WTC11 (cell line): ENCODE measurements at regions of chr12 and their contacts with region 1.

Region 1: GRCh38 chr12:125183187-125184067 is 118.2 kb downstream of the AACS start:
- DNase-seq: peak; percentile 91
- ATAC-seq: peak; percentile 46
- H3K4me3 Mint-ChIP-seq: peak overlapping the region; percentile 62
- H3K27ac Mint-ChIP-seq: no peak overlapping the region
- H3K4me1 Mint-ChIP-seq: peaks cover 37% of the 10 kb centered on the region
- H3K27me3 Mint-ChIP-seq: peaks cover 27% of the 10 kb centered on the region
- CTCF ChIP-seq: peak; percentile 100

Region 2: GRCh38 chr12:124927201-124928094 is 256.0 kb before region 1 on chr12:
- CTCF ChIA-PET with region 1: no interaction called
- POLR2A ChIA-PET with region 1: no interaction called
- DNase-seq: peak; percentile 94
- ATAC-seq: peak; percentile 75
- H3K4me3 Mint-ChIP-seq: peak overlapping the region; percentile 99
- H3K27ac Mint-ChIP-seq: peak overlapping the region; percentile 96
- H3K4me1 Mint-ChIP-seq: peaks cover 15% of the 10 kb centered on the region
- H3K27me3 Mint-ChIP-seq: peaks cover 4% of the 10 kb centered on the region
- CTCF ChIP-seq: no peak

Region 3: DNA sequence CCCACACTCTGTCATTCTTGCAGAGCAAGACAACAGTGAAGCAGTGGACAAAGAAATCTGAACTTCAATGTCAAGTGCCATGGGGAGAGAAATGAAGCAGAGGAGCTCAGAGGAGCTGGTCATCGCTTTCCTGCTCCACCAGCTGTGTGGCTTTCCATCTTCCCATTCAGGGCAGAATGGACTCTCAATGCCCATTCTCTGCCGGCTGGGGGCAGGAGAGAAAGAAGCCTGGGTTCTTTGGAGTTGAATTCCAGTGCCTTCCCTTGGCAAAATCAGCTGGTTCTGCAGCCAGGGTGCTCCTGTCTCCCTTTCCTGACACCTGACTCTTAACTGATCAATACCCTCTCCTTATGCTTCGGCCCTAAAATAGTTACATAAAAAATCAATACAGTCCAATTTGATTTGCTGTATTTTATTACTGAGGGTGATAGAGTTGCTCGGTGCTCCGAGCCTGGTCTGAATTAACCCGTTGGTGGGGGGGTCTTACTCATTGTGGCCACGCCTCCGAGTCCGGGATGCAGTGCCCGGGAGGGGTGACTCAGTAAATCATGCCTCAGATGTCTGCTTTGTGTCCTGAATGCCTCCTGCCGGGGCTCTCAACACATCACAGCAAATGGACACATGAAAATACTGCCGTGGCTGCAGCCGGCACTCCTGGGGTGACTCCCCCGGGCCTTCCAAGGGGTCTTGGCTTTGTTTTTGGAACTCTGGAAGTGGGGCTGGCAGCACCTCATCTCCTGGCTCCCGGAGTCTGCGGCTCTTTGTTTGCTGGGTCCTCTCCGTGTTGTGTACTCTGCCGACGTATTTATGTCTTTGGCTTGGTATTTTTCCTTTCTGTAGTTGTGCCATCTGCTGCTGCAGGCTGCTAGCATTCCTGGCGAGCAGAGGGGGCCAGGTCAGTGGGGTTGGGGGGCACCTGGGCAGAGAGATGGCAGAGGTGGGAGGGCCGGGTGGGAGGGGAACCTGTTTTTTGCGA is 10.7 kb after region 1 on chr12:
- CTCF ChIA-PET with region 1: interaction called, 17 read pairs
- POLR2A ChIA-PET with region 1: no interaction called
- DNase-seq: peak; percentile 68
- ATAC-seq: peak; percentile 63
- H3K4me3 Mint-ChIP-seq: peak overlapping the region; percentile 53
- H3K27ac Mint-ChIP-seq: no peak overlapping the region; the same call in 1 of the 2 replicates
- H3K4me1 Mint-ChIP-seq: peaks cover 77% of the 10 kb centered on the region
- H3K27me3 Mint-ChIP-seq: peaks cover 4% of the 10 kb centered on the region; the same call in 1 of the 2 replicates
- CTCF ChIP-seq: no peak

Region 4: GRCh38 chr12:125203145-125203765 is 19.8 kb after region 1 on chr12:
- CTCF ChIA-PET with region 1: interaction called, 19 read pairs
- POLR2A ChIA-PET with region 1: no interaction called
- DNase-seq: no peak
- ATAC-seq: no peak
- H3K4me3 Mint-ChIP-seq: no peak overlapping the region
- H3K27ac Mint-ChIP-seq: no peak overlapping the region
- H3K4me1 Mint-ChIP-seq: peaks cover 34% of the 10 kb centered on the region
- H3K27me3 Mint-ChIP-seq: no peaks in the 10 kb centered on the region
- CTCF ChIP-seq: no peak

Region 5: GRCh38 chr12:125402874-125403789 is 219.7 kb after region 1 on chr12:
- CTCF ChIA-PET with region 1: interaction called, 15 read pairs
- POLR2A ChIA-PET with region 1: interaction called, 5 read pairs
- DNase-seq: peak; percentile 71
- ATAC-seq: peak; percentile 92
- H3K4me3 Mint-ChIP-seq: no peak overlapping the region
- H3K27ac Mint-ChIP-seq: no peak overlapping the region
- H3K4me1 Mint-ChIP-seq: peaks cover 36% of the 10 kb centered on the region
- H3K27me3 Mint-ChIP-seq: no peaks in the 10 kb centered on the region
- CTCF ChIP-seq: 0 out of 2 replicates have a peak, but pooled peaks have one; percentile 30

Region 6: GRCh38 chr12:125683748-125684381 is 500.4 kb after region 1 on chr12:
- CTCF ChIA-PET with region 1: interaction called, 12 read pairs
- POLR2A ChIA-PET with region 1: no interaction called
- DNase-seq: peak; percentile 98
- ATAC-seq: peak; percentile 99
- H3K4me3 Mint-ChIP-seq: no peak overlapping the region
- H3K27ac Mint-ChIP-seq: no peak overlapping the region
- H3K4me1 Mint-ChIP-seq: no peaks in the 10 kb centered on the region
- H3K27me3 Mint-ChIP-seq: peaks cover 30% of the 10 kb centered on the region
- CTCF ChIP-seq: peak; percentile 94